AG04449 (cell line): ENCODE measurements at regions of chr3 and their contacts with region 1.

Region 1: GRCh38 chr3:151227807-151228665 is 25.0 kb upstream of the GPR171 start:
- DNase-seq: no peak
- H3K4me3 ChIP-seq: no peak overlapping the region
- CTCF ChIP-seq: peak; percentile 83

Region 2: DNA sequence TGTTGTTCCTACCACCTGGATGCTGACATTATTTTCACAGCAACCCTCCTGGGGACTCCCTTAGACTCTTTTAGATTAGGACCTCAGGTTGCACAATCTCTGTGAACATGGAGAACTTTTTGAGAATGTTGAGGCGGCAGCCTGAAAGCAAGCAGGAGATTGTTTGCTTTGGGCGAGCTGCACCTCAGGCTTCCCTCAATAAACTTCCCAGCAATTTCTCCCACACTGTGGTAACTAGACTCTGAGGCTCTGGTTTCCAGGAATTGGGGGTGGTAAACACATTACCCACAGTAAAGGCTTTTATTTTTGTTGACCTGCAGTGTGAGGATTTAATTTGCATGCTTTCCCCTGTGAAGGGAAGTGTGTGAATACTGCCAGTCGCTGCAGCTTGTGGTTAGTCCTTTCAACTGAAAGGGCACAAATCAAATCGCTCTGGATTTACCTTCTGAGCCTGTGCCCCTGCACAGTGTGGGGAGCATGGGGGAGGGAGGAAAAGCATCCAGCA is 429.9 kb before region 1 on chr3:
- CTCF ChIA-PET with region 1: no interaction called
- POLR2A ChIA-PET with region 1: no interaction called
- DNase-seq: no peak
- H3K4me3 ChIP-seq: no peak overlapping the region
- CTCF ChIP-seq: no peak

Region 3: GRCh38 chr3:151203051-151203420 is 25.0 kb before region 1 on chr3 and contains the start of gene GPR171:
- CTCF ChIA-PET with region 1: interaction called, 22 read pairs
- POLR2A ChIA-PET with region 1: no interaction called
- DNase-seq: no peak
- H3K4me3 ChIP-seq: no peak within 1 kb of the TSS
- CTCF ChIP-seq: no peak

Region 4: GRCh38 chr3:151210676-151211381 is 17.2 kb before region 1 on chr3:
- CTCF ChIA-PET with region 1: interaction called, 22 read pairs
- POLR2A ChIA-PET with region 1: no interaction called
- DNase-seq: no peak
- H3K4me3 ChIP-seq: no peak overlapping the region
- CTCF ChIP-seq: no peak

Region 5: GRCh38 chr3:151256749-151257148 is 28.7 kb after region 1 on chr3:
- CTCF ChIA-PET with region 1: interaction called, 31 read pairs
- POLR2A ChIA-PET with region 1: no interaction called
- DNase-seq: no peak
- H3K4me3 ChIP-seq: no peak overlapping the region
- CTCF ChIP-seq: no peak

Region 6: GRCh38 chr3:151265866-151266265 is 37.8 kb after region 1 on chr3:
- CTCF ChIA-PET with region 1: interaction called, 18 read pairs
- POLR2A ChIA-PET with region 1: no interaction called
- DNase-seq: no peak
- H3K4me3 ChIP-seq: no peak overlapping the region
- CTCF ChIP-seq: no peak

Region 7: DNA sequence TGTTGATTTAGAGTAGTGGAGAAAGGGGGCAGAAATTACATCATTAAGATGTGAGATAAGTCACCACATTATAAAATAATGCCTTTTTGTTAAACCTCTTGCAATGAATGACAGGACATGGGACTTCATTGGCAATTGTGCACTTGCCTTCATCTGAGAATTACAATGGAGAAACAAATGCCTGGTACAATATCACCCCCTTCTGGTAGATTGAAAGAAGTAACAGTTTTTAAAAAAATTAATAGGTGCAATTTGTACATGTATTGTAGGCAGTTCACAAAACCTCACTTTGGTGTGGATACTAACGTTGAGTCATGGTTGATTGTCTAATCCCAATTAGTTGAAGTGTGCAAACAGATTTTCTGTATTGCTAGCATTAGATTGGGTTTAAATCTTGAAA is 54.9 kb after region 1 on chr3:
- CTCF ChIA-PET with region 1: interaction called, 191 read pairs
- POLR2A ChIA-PET with region 1: no interaction called
- DNase-seq: no peak
- H3K4me3 ChIP-seq: no peak overlapping the region
- CTCF ChIP-seq: peak; percentile 35

Region 8: DNA sequence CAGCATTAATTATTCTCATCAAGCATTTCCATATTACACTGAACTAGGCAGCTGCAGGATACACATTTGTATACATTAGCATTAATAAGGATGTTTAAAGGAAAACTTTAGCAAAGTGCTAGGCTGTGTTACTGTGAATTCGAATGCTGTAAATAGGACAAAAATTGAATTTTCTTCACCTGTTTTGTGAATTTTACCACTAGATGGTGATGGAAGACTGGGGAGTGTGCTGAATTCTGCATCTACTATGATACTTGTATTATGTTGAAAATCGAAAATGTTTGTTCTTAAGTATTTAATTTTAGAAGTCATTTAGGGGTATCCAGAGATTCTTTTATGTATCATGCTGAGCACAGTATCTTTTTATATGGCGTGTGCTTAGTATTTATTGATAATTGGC is 62.6 kb after region 1 on chr3:
- CTCF ChIA-PET with region 1: interaction called, 56 read pairs
- POLR2A ChIA-PET with region 1: no interaction called
- DNase-seq: no peak
- H3K4me3 ChIP-seq: no peak overlapping the region
- CTCF ChIP-seq: peak; percentile 28

Region 9: DNA sequence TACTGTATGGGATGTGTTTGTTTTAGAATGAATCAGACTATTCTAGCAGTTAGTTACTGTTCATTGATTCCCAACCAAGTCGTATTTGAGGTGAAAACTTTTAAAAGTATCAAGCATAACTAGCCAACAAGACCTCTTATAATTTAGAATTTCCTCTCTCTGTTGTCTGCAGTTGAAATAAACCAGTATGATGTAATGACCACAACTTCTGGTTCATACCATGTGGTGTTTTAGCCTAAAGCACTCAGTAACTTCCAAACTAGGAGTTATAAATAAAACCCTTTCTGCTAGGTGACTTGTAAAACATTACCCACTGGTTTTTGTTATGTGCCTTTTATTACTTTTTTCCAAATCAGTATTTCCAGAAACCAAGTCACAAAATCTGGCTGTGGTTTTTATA is 176.3 kb after region 1 on chr3:
- CTCF ChIA-PET with region 1: no interaction called
- POLR2A ChIA-PET with region 1: no interaction called
- DNase-seq: no peak
- H3K4me3 ChIP-seq: no peak overlapping the region
- CTCF ChIP-seq: no peak